B cell (primary cell): ENCODE measurements at regions of chr2 and their contacts with region 1.

Region 1: DNA sequence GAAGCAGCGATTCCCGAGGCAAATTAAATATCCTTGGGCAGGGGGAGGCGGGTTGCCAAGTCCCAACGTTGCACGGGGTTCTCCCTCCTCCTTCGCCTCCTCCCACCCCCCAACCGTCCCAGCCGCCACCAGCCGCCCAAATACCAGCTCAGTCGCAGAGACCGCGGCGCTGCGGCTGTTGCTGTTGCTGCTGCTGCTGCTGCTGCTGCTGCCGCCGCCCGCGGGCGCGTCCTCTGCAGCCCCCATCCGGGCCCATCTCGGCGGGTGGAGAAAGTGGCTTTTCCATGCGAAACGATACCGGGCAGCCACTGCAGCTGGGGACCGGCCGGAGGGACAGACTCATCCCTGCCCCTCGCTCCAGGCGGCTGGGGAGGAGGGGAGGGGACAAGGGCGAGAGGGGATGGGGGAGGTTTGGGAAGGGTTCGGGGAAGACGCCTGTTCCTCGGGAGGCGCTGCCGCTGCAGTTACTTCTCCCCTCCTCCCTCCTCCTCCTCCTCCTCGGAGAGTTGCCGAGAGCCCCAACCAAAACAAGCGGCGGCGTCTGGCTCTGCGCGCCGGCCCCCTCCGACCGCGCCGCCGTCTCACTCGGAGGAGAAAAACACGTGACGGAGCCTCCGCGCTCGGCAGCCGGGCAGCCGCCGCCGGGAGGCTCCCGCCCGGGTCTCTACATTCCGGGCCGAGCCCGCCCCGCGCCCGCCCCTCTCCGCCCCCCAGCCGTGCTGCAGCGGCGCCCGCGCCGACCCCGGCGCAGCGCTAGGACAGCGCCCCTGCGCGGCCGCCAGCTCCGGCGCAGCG is at the start of gene IRS1:
- DNase-seq: peak; percentile 81
- ATAC-seq: peak; percentile 51
- H3K4me3 ChIP-seq: peak within 1 kb of the TSS; percentile 46 to 79 (median 75)
- H3K4me3 Mint-ChIP-seq: peak within 1 kb of the TSS; percentile 95
- H3K27ac ChIP-seq: peak within 1 kb of the TSS; percentile 30 to 72
- H3K27ac Mint-ChIP-seq: peak within 1 kb of the TSS; percentile 94
- H3K4me1 ChIP-seq: peaks cover 17 to 26% of the 10 kb centered on the region in 2 donors
- H3K4me1 Mint-ChIP-seq: peaks cover 40% of the 10 kb centered on the region
- H3K27me3 ChIP-seq: peaks cover 0 to under 1% (median 0%) of the 10 kb centered on the region in 4 experiments
- H3K27me3 Mint-ChIP-seq: peaks cover 5% of the 10 kb centered on the region
- CTCF ChIP-seq: peak; percentile 62
- total RNA-seq, gene IRS1: 10.0 and 11.9 TPM in 2 replicates

Region 2: DNA sequence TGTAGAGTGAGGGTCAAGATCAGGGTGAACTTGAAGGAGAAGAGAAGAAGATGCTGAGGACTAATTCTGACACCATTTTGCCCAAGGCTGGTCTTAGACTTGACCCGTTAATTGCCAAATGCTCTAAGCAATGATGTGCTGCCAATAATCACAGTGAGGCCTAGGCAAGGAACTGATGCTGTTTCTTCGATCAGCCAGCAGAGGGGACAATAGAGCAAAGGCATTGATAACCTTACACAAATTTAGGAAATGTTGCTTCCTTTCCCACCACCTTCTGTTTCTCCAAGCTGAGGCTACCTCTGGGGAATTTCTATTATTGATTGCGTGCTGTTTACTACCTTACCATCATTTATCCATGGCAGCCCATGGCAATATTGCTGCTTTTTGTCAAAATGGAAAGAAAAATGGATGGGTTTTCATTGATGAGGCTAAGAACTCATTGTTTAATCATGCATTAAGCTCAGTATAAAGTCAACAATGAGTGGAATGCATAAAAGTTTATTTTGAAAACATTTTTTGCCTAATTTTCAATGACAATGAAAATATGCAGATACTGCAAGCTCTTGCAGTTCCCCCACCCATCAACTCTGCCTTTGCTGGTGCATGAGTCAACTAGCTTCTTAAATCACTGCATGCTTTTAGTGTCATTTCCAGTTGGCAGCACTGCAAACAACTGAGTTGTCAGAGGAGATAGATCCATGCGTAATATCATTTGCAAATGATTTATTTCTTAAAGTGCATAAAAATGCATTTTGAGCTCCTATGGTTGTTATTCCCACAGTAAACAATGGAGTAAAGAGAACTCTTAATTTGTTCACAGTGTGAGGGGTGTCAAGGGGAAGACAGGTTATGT is 1516.3 kb before region 1 on chr2:
- CTCF ChIA-PET with region 1: interaction called, 3 read pairs
- POLR2A ChIA-PET with region 1: no interaction called
- intact Hi-C with region 1: loop called (anchors 5 kb)
- DNase-seq: peak; percentile 35
- ATAC-seq: no peak
- H3K4me3 ChIP-seq: no peak overlapping the region
- H3K4me3 Mint-ChIP-seq: no peak overlapping the region
- H3K27ac ChIP-seq: no peak overlapping the region
- H3K27ac Mint-ChIP-seq: no peak overlapping the region
- H3K4me1 ChIP-seq: no peaks in the 10 kb centered on the region
- H3K4me1 Mint-ChIP-seq: no peaks in the 10 kb centered on the region
- H3K27me3 ChIP-seq: peaks cover 0 to 2% (median under 1%) of the 10 kb centered on the region in 4 experiments
- H3K27me3 Mint-ChIP-seq: no peaks in the 10 kb centered on the region
- CTCF ChIP-seq: peak; percentile 80

Region 3: DNA sequence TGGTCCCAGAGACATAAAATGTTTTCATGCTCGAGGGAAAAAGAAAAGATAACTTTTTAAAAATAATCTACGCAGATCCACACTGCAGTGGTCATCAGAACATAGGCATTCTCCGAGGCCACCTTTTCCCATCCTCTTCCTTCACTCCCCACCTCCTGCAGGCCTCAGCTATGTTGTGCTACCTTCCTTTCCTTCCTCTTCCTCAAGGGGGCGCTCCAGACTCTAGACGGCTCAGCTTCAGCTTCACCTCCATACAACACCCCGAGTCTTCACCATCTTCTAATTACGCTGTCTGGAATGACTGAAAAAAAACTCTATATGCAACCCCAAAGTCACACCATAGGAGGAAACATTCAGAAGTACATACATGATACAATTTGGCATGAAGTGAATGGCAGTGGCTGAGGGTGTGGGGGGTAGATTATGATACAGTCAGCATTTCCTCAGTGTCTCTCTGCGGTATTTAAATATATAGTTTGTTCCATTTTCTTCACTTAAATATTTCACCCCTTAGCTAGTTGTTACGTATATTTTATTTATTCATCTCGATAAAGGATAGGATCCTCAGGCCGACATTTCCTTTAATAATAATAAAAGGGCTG is 583.4 kb before region 1 on chr2:
- CTCF ChIA-PET with region 1: interaction called, 78 read pairs
- POLR2A ChIA-PET with region 1: no interaction called
- intact Hi-C with region 1: no loop called
- DNase-seq: peak; percentile 74
- ATAC-seq: peak; percentile 60
- H3K4me3 ChIP-seq: no peak overlapping the region
- H3K4me3 Mint-ChIP-seq: no peak overlapping the region
- H3K27ac ChIP-seq: no peak overlapping the region
- H3K27ac Mint-ChIP-seq: no peak overlapping the region
- H3K4me1 ChIP-seq: no peaks in the 10 kb centered on the region
- H3K4me1 Mint-ChIP-seq: no peaks in the 10 kb centered on the region
- H3K27me3 ChIP-seq: peaks cover 0 to 5% (median 0%) of the 10 kb centered on the region in 4 experiments
- H3K27me3 Mint-ChIP-seq: peaks cover 7% of the 10 kb centered on the region
- CTCF ChIP-seq: peak; percentile 82

Region 4: GRCh38 chr2:226772389-226773179 is 26.8 kb before region 1 on chr2:
- CTCF ChIA-PET with region 1: interaction called, 27 read pairs
- POLR2A ChIA-PET with region 1: interaction called, 5 read pairs
- intact Hi-C with region 1: loop called (anchors 1 kb)
- DNase-seq: peak; percentile 78
- ATAC-seq: peak; percentile 82
- H3K4me3 ChIP-seq: peak overlapping the region in 1 of 5 experiments; percentile 16
- H3K4me3 Mint-ChIP-seq: peak overlapping the region; percentile 64
- H3K27ac ChIP-seq: peak overlapping the region; percentile 4 to 53
- H3K27ac Mint-ChIP-seq: peak overlapping the region; percentile 71
- H3K4me1 ChIP-seq: peaks cover 26 to 31% of the 10 kb centered on the region in 2 donors
- H3K4me1 Mint-ChIP-seq: peaks cover 50% of the 10 kb centered on the region
- H3K27me3 ChIP-seq: no peaks in the 10 kb centered on the region
- H3K27me3 Mint-ChIP-seq: no peaks in the 10 kb centered on the region
- CTCF ChIP-seq: no peak

Region 5: DNA sequence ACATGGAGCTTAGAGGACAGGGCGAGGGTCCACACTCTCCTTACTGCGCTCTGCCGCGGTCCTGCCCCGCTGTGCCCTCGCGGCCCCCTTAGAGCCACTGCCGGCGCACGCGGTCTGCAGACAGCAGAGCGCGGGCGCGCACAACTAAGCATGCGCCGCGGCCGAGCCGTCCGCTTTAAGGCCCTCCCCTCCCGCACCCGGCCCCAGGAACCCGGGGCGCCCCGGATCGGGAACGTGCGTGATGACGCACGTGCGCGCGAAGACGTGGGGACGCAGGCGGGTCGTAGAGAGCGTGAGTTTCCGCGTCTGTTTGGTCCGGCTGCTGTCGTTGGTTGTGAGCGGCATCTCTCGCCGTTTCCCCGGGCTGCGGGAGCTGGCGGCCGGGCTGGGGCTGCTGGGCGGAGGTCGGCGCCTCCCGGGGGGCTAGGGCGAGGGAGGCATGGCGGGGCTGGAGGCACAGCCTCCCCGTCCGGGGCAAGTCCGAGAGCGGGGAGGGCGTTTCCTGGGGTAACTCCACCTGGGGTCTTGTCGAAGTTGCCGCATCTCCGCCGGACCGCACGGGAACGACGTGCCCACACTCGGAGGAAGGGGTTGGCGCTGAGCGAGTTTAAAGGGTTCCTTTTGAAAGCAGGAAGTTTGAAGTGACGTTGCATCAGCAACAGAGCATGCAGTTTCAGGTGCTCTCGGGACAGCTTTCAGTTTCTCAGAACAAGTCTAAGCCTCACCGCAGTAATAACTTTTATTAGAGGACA is 36.6 kb after region 1 on chr2 and contains the start of gene RHBDD1:
- CTCF ChIA-PET with region 1: interaction called, 13 read pairs
- POLR2A ChIA-PET with region 1: interaction called, 16 read pairs
- intact Hi-C with region 1: loop called (anchors 1 kb)
- DNase-seq: peak; percentile 98
- ATAC-seq: peak; percentile 84
- H3K4me3 ChIP-seq: peak within 1 kb of the TSS; percentile 63 to 89 (median 81)
- H3K4me3 Mint-ChIP-seq: peak within 1 kb of the TSS; percentile 98
- H3K27ac ChIP-seq: peak within 1 kb of the TSS; percentile 95 to 99
- H3K27ac Mint-ChIP-seq: peak within 1 kb of the TSS; percentile 100
- H3K4me1 ChIP-seq: peaks cover 46 to 50% of the 10 kb centered on the region in 2 donors
- H3K4me1 Mint-ChIP-seq: peaks cover 52% of the 10 kb centered on the region
- H3K27me3 ChIP-seq: no peaks in the 10 kb centered on the region
- H3K27me3 Mint-ChIP-seq: no peaks in the 10 kb centered on the region
- CTCF ChIP-seq: no peak
- total RNA-seq, gene RHBDD1: 128 and 142 TPM in 2 replicates

Region 6: GRCh38 chr2:226869371-226869770 is 70.0 kb after region 1 on chr2:
- CTCF ChIA-PET with region 1: no interaction called
- POLR2A ChIA-PET with region 1: no interaction called
- intact Hi-C with region 1: no loop called
- DNase-seq: no peak
- ATAC-seq: no peak
- H3K4me3 ChIP-seq: no peak overlapping the region
- H3K4me3 Mint-ChIP-seq: no peak overlapping the region
- H3K27ac ChIP-seq: no peak overlapping the region
- H3K27ac Mint-ChIP-seq: no peak overlapping the region
- H3K4me1 ChIP-seq: peaks cover 9 to 15% of the 10 kb centered on the region in 2 donors
- H3K4me1 Mint-ChIP-seq: peaks cover 17% of the 10 kb centered on the region
- H3K27me3 ChIP-seq: no peaks in the 10 kb centered on the region
- H3K27me3 Mint-ChIP-seq: no peaks in the 10 kb centered on the region
- CTCF ChIP-seq: no peak

Region 7: GRCh38 chr2:227106845-227107759 is 307.7 kb after region 1 on chr2:
- CTCF ChIA-PET with region 1: no interaction called
- POLR2A ChIA-PET with region 1: no interaction called
- intact Hi-C with region 1: loop called (anchors 5 kb)
- DNase-seq: peak; percentile 46
- ATAC-seq: no peak
- H3K4me3 ChIP-seq: no peak overlapping the region
- H3K4me3 Mint-ChIP-seq: no peak overlapping the region
- H3K27ac ChIP-seq: no peak overlapping the region
- H3K27ac Mint-ChIP-seq: no peak overlapping the region
- H3K4me1 ChIP-seq: no peaks in the 10 kb centered on the region
- H3K4me1 Mint-ChIP-seq: no peaks in the 10 kb centered on the region
- H3K27me3 ChIP-seq: no peaks in the 10 kb centered on the region
- H3K27me3 Mint-ChIP-seq: no peaks in the 10 kb centered on the region
- CTCF ChIP-seq: peak; percentile 65